ENCODE measurements at regions of chr18 and their contacts with region 1.

Region 1: DNA sequence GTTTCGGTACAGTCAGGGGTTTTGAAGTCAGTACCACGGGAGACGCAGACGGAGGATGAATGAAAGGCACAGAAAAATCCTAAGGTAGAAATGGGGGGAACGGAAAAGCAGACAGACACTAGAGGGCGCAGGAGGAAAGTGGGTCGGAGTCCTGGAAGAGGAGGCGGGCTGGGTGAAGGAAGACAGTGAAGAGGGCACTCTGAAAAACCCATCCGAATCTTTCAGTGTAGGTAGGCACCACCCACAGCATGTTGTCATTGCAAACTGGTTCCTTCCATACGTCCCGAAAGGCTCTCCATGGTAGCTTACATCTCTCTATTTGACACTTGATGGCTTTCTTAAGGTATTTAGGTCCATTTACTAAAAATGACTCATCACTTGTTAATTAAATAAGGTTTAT is 18.5 kb upstream of the ZNF236 start:
- DNase-seq: no peak
- H3K4me3 ChIP-seq: no peak overlapping the region
- H3K27ac ChIP-seq: no peak overlapping the region
- H3K4me1 ChIP-seq: peaks cover 12% of the 10 kb centered on the region
- H3K27me3 ChIP-seq: no peaks in the 10 kb centered on the region
- CTCF ChIP-seq: peak; percentile 9 to 70 (median 68)
- POLR2A ChIP-seq: no peak

Region 2: DNA sequence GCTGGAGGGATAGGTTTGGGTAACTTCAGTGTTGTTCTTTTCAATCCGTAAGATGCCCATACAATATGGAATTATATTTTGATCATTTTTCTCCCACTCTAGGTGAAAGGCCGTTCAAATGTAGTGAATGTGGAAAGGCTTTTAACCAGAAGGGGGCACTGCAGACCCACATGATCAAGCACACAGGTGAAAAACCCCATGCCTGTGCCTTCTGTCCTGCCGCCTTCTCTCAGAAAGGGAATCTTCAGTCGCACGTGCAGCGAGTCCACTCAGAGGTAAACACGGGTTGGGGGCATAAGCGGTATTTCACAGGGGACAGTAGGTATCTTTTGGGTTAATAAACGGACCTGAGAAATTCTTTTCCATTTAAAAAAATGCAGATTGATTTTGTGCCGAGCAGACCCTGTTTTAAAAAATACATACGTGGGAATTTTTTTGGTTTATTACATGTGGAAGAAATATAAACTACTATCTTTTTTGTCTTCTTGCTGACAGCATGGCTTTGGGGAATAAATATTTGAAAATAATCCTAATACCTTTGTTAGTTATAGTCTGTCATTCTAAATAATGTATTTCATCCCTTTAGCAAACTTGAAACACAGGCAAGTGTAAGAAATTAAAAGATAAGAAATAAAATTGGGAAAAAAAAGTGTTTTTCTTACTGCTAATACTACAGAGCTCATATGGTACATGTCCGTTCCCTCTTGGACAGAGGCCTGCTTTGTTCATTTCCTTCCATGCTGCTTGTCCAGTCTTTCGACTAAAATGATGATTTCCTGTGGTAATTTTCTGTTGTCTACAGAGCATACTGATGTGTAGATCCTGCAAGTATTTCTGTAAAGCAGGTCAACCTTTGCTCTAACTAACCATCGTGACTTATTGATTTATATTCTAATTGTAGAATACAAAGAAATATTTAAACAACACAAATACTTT is 71.8 kb after region 1 on chr18:
- intact Hi-C with region 1: loop called (anchors 10 kb)
- DNase-seq: no peak
- H3K4me3 ChIP-seq: no peak overlapping the region
- H3K27ac ChIP-seq: no peak overlapping the region
- H3K4me1 ChIP-seq: no peaks in the 10 kb centered on the region
- H3K27me3 ChIP-seq: no peaks in the 10 kb centered on the region
- CTCF ChIP-seq: peak; percentile 19 to 35 (median 30)
- POLR2A ChIP-seq: no peak

Region 3: DNA sequence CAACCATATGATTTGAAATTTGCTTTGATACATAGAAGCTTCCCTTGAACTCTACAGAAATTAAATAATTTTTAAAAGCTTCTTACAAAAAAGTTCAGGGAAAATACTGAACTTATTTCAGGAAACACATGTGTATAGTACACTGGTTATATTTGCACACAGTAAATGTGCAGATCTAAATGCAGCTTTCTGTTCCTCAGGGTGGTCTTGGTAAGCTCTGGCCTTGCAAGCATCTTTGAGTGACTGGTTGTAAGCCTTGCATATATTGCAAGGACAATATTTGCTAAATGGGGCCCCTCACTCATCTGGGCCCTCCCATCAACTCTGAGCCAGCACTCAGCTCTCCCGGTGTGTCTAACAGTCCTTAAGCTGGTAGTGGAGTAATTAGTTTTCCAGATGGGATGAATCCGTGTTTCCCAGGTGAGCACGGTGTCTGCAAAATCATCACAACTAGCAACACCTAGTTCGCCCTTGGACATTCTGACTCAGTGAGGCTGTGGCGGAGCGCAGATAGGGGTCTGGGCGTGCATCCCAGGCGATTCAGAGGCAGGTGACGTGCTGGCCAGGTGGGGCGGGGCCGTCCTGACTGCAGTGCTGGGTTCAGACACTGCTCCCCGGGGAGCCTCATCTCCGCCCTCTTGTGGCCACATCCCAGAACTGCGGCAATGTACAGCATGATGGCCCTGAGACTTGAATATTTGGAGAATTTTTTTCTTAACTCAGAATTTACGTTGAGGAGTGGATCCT is 179.2 kb after region 1 on chr18:
- intact Hi-C with region 1: loop called (anchors 10 kb)
- DNase-seq: peak; percentile 84 to 94
- H3K4me3 ChIP-seq: no peak overlapping the region
- H3K27ac ChIP-seq: no peak overlapping the region
- H3K4me1 ChIP-seq: no peaks in the 10 kb centered on the region
- H3K27me3 ChIP-seq: no peaks in the 10 kb centered on the region
- CTCF ChIP-seq: peak; percentile 72 to 87 (median 85)
- POLR2A ChIP-seq: no peak

Measured in vagina (tissue), 2 donors.